ENCODE measurements at regions of chr9 and their contacts with region 1.

Region 1: DNA sequence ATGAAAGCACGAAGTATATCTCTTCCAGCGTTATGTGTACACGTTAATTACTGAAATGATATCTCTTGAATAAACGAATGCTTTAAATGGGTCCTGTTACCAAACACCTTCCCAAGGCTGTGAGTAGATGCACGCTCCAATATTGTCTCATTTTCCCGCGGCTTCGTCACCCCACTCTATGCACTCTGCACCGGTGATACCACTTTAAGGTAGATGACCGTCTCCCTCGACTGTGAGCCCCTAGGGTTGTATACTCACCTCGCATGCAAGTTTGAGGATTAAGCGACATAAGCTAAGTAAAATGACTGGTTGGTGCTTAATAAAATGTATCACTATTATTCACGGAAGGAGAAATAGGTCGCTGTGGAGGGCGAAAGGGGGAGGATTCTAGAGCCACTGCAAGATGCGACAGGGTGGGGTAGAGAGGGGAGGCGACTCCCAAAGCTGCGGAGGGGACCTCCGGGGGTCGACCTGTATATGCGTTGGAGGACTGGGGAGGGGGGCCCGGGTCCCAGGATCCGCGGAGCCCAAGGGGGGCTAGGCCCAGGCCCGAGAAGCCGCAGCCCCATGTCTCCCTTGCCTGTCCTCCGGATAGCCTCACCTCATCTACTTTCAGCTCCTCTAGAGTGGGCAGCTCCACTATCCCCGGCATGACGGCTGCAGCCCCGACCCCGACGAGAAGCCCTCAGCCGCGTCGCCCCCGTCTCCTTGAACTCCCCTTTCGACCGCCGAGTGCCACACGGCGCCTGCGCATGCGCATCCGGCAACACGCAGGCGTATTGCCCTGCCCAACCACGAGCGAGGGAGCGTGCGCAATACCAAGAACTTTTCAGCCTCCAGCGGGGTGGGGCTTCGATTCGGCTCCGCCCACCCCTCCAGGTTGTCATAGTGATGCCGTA is at the starts of genes MORN5 and NDUFA8:
- DNase-seq: peak; percentile 97
- ATAC-seq: peak; percentile 97
- H3K4me3 ChIP-seq: peak within 1 kb of the TSS; percentile 69 to 97 (median 91)
- H3K4me3 Mint-ChIP-seq: peak within 1 kb of the TSS; percentile 96
- H3K27ac ChIP-seq: peak within 1 kb of the TSS; percentile 73 to 83
- H3K27ac Mint-ChIP-seq: peak within 1 kb of the TSS; percentile 92
- H3K4me1 ChIP-seq: peaks cover 9% of the 10 kb centered on the region in 2 donors
- H3K4me1 Mint-ChIP-seq: peaks cover 35% of the 10 kb centered on the region
- H3K27me3 ChIP-seq: peaks cover 0 to 19% (median 0%) of the 10 kb centered on the region in 4 experiments
- H3K27me3 Mint-ChIP-seq: peaks cover 23% of the 10 kb centered on the region
- CTCF ChIP-seq: no peak
- total RNA-seq, gene MORN5: not detected in 2 replicates
- total RNA-seq, gene NDUFA8: 12.7 and 15.7 TPM in 2 replicates

Region 2: DNA sequence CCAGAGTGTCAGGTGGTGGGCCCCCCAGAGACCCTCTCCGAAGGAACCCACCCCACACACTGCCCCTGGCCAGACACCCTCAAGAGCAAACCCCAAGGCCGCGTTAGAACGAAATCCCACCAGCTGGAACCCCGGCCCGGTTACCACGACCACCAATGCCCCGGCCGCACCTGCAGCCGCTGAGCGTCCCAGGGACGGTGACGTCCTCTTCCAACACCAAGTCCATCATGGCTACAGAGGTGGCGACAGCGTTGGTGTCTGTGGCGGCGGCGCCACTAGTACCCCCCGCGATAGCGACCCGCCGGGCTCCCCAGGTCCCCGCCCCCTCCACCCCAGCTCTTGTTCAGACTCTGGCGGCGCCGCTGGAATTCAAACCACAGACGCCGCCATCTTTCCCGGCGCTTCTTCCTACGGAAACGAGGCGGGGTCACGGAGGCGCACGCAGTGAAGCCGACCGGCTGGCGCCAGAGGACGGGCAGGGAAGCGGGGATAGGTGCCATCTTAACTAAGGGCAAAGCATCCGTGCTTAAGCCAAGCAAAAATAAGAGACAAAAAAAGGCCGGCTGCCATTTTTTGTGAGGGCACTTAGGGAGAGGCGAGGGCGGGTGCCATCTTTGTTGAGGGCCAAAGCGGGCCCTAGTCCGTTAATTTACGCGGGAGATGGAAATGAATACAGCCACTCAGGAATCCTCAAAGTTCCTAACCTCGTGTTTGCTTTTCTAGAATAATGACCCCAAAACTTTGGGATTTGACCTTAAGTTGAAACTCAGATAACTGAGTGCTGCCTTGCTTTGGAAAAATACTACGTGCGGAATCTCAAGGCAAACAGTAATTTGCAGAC is 1579.3 kb before region 1 on chr9 and contains the start of gene CDK5RAP2:
- CTCF ChIA-PET with region 1: no interaction called
- POLR2A ChIA-PET with region 1: no interaction called
- intact Hi-C with region 1: loop called (anchors 5 kb)
- DNase-seq: peak; percentile 94
- ATAC-seq: peak; percentile 92
- H3K4me3 ChIP-seq: peak within 1 kb of the TSS; percentile 70 to 92 (median 86)
- H3K4me3 Mint-ChIP-seq: peak within 1 kb of the TSS; percentile 94
- H3K27ac ChIP-seq: peak within 1 kb of the TSS; percentile 77 to 78
- H3K27ac Mint-ChIP-seq: peak within 1 kb of the TSS; percentile 93
- H3K4me1 ChIP-seq: peaks cover 27 to 31% of the 10 kb centered on the region in 2 donors
- H3K4me1 Mint-ChIP-seq: peaks cover 53% of the 10 kb centered on the region
- H3K27me3 ChIP-seq: no peaks in the 10 kb centered on the region
- H3K27me3 Mint-ChIP-seq: no peaks in the 10 kb centered on the region
- CTCF ChIP-seq: no peak
- total RNA-seq, gene CDK5RAP2: 116 and 122 TPM in 2 replicates

Region 3: DNA sequence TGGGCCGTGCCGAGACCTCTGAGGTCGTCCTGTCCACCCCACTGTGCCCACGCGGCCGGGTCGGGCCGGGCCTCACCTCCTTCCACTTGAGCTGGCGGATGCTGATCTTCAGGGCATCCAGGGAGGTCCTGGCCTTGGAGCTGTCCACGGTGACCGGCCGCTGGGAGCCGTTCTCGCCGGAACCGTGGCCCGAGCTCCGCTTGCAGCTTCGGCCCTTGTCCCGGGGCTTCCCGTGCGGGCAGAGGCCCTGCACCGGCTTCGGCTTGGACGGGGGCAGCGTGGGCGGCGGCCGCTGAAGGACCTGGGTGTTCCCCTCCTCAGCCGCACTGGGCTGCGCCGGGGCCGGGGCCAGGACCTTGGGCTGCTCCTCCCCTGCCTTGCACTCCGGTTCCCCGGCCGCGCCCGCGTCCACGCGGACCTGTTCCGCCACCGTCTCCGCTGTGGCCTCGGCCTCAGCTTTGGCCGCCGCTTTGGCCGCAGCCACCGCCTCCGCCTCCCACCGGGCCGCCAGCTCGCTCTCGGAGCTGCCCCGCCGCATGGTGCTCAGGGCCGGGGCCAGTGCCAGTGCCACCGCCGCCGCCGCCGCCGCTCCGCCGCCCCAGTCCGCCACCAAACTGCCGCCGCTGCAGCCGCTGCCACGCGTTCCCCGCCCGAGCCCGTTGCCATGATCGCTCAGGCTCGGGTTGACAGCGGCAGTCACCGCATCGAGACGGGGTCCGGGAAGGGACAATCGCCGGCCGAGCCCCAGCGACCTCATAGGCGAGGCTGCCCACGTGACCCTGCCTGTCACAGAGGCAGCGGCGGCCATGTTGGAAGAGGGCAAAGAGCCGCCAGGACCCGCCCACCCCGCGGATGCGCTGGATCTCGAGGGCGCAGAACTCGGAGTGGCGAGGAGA is 66.4 kb before region 1 on chr9 and contains the start of gene TTLL11:
- CTCF ChIA-PET with region 1: interaction called, 4 read pairs
- POLR2A ChIA-PET with region 1: no interaction called
- intact Hi-C with region 1: loop called (anchors 1 kb)
- DNase-seq: peak; percentile 97
- ATAC-seq: peak; percentile 94
- H3K4me3 ChIP-seq: peak within 1 kb of the TSS; percentile 46 to 78 (median 77)
- H3K4me3 Mint-ChIP-seq: peak within 1 kb of the TSS; percentile 90
- H3K27ac ChIP-seq: peak within 1 kb of the TSS in 1 of 2 donors; percentile 60
- H3K27ac Mint-ChIP-seq: peak within 1 kb of the TSS; percentile 33
- H3K4me1 ChIP-seq: peaks cover 24 to 29% of the 10 kb centered on the region in 2 donors
- H3K4me1 Mint-ChIP-seq: peaks cover 45% of the 10 kb centered on the region
- H3K27me3 ChIP-seq: no peaks in the 10 kb centered on the region
- H3K27me3 Mint-ChIP-seq: peaks cover 9% of the 10 kb centered on the region
- CTCF ChIP-seq: no peak
- total RNA-seq, gene TTLL11: 3.8 and 3.9 TPM in 2 replicates

Region 4: DNA sequence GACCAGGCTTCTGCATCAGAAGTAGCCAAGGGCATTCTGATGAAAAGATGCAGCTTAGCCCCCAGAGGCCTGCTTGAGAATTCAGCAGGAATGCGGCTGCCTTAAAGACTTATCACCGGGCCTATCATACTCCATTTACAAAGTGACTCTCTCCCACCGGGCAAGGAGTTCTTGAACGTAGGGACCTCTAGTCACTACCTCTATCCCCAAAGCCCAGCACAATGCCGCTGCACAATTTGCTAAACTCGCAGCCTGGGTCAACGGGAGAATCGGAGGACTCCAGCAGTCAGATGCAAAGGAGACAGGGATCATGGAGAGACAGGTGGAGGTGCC is 668.5 kb after region 1 on chr9:
- CTCF ChIA-PET with region 1: no interaction called
- POLR2A ChIA-PET with region 1: no interaction called
- intact Hi-C with region 1: loop called (anchors 5 kb)
- DNase-seq: no peak
- ATAC-seq: peak; percentile 1
- H3K4me3 ChIP-seq: peak overlapping the region; percentile 74 to 98 (median 77)
- H3K4me3 Mint-ChIP-seq: peak overlapping the region; percentile 92
- H3K27ac ChIP-seq: peak overlapping the region; percentile 82 to 85
- H3K27ac Mint-ChIP-seq: peak overlapping the region; percentile 88
- H3K4me1 ChIP-seq: peaks cover 8 to 20% of the 10 kb centered on the region in 2 donors
- H3K4me1 Mint-ChIP-seq: peaks cover 31% of the 10 kb centered on the region
- H3K27me3 ChIP-seq: no peaks in the 10 kb centered on the region
- H3K27me3 Mint-ChIP-seq: no peaks in the 10 kb centered on the region
- CTCF ChIP-seq: no peak